MCF 10A (cell line): ENCODE measurements at regions of chr9 and their contacts with region 1.

Region 1: GRCh38 chr9:78601957-78602565 is 305.1 kb downstream of the PSAT1 start:
- DNase-seq: peak; percentile 67
- H3K4me3 Mint-ChIP-seq: no peak overlapping the region
- H3K27ac Mint-ChIP-seq: no peak overlapping the region
- H3K4me1 Mint-ChIP-seq: no peaks in the 10 kb centered on the region
- H3K27me3 Mint-ChIP-seq: no peaks in the 10 kb centered on the region
- CTCF ChIP-seq: peak; percentile 82

Region 2: GRCh38 chr9:78439190-78439865 is 162.7 kb before region 1 on chr9:
- CTCF ChIA-PET with region 1: interaction called, 7 read pairs
- POLR2A ChIA-PET with region 1: no interaction called
- intact Hi-C with region 1: loop called (anchors 1 kb)
- DNase-seq: peak; percentile 83
- H3K4me3 Mint-ChIP-seq: no peak overlapping the region
- H3K27ac Mint-ChIP-seq: no peak overlapping the region
- H3K4me1 Mint-ChIP-seq: no peaks in the 10 kb centered on the region
- H3K27me3 Mint-ChIP-seq: peaks cover 13% of the 10 kb centered on the region
- CTCF ChIP-seq: peak; percentile 93

Region 3: DNA sequence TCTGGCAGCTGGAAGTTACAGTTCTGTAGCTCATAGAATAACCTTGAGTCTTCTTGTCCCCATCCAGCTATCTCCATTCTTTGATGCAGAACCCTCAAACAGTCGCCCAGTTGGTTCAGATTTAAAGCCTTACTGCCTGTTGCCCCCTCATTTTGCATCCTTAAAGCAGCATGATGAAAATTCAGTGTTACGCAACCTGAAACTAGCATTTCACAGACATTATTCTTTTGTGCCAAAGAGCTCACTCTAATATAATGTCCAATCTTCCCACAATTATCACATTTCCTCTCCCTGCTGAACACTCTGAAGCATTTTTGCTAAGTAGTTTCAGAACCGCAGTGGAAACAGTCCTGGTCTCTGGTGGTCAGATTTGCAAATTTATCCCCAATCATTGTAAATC is 12.8 kb after region 1 on chr9:
- CTCF ChIA-PET with region 1: interaction called, 15 read pairs
- POLR2A ChIA-PET with region 1: interaction called, 5 read pairs
- intact Hi-C with region 1: no loop called
- DNase-seq: no peak
- H3K4me3 Mint-ChIP-seq: no peak overlapping the region
- H3K27ac Mint-ChIP-seq: no peak overlapping the region
- H3K4me1 Mint-ChIP-seq: peaks cover 6% of the 10 kb centered on the region
- H3K27me3 Mint-ChIP-seq: no peaks in the 10 kb centered on the region
- CTCF ChIP-seq: no peak

Region 4: DNA sequence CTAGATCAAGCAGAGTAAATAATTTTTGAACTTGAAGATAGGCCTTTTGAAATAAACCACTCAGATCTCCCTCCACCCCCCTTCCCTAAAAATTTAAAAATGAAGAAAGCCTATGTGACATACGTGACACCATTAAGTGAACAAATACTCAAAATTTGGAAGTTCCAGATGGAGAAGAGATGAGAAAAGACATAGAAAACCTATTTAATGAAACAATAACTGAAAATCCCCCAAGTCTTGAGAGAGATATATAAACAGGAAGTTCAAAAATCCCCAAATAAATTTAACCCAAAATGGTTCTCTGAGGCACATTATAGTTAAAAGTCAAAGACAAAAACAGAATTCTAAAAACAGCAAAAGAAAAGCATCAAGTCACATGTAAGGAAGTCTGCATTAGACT is 123.4 kb after region 1 on chr9:
- CTCF ChIA-PET with region 1: no interaction called
- POLR2A ChIA-PET with region 1: no interaction called
- intact Hi-C with region 1: no loop called
- DNase-seq: no peak
- H3K4me3 Mint-ChIP-seq: no peak overlapping the region
- H3K27ac Mint-ChIP-seq: no peak overlapping the region
- H3K4me1 Mint-ChIP-seq: no peaks in the 10 kb centered on the region
- H3K27me3 Mint-ChIP-seq: no peaks in the 10 kb centered on the region
- CTCF ChIP-seq: no peak

Region 5: DNA sequence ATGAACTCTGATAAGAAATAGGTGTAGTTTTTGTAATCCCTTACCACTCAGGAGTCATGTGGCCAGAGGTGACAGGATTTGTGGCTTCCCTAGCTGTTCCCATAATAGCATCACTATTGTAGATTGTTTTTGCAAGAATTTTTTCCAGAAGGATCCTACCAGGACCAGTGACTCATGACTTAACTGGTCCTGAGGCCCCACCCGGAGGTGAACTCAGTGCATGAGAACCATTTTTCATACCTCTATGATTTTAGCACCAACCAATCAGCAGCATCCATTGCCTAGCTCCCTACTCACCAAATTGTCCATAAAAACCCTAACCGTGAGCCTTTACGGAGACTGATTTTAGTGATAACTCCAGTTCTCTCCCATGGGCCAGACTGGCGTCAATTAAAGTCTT is 179.6 kb after region 1 on chr9:
- CTCF ChIA-PET with region 1: no interaction called
- POLR2A ChIA-PET with region 1: no interaction called
- intact Hi-C with region 1: loop called (anchors 1 kb)
- DNase-seq: peak; percentile 13
- H3K4me3 Mint-ChIP-seq: no peak overlapping the region
- H3K27ac Mint-ChIP-seq: no peak overlapping the region
- H3K4me1 Mint-ChIP-seq: no peaks in the 10 kb centered on the region
- H3K27me3 Mint-ChIP-seq: no peaks in the 10 kb centered on the region
- CTCF ChIP-seq: no peak

Region 6: DNA sequence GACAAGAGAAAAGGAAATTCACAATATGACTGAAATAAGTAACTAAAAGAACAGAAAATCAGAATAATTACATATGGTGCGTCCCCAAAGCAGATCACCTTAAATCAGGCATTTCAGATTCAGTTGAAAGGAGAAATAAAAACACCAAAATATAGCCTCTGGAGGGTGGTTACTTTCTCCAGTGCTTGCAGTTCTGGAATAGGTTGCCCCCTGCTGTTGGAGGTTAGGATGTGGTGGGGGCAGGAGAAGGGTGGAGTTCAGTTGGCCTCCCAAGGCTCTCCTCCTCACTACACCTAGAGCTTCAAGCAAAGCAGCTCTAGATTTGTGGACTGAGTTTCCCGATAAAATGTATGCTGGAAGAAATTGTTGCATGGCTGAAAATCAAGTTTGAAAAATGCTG is 631.5 kb after region 1 on chr9:
- CTCF ChIA-PET with region 1: interaction called, 4 read pairs
- POLR2A ChIA-PET with region 1: no interaction called
- intact Hi-C with region 1: loop called (anchors 1 kb)
- DNase-seq: peak; percentile 65
- H3K4me3 Mint-ChIP-seq: no peak overlapping the region
- H3K27ac Mint-ChIP-seq: no peak overlapping the region
- H3K4me1 Mint-ChIP-seq: no peaks in the 10 kb centered on the region
- H3K27me3 Mint-ChIP-seq: no peaks in the 10 kb centered on the region
- CTCF ChIP-seq: peak; percentile 45

Region 7: GRCh38 chr9:79256691-79257213 is 654.7 kb after region 1 on chr9:
- CTCF ChIA-PET with region 1: no interaction called
- POLR2A ChIA-PET with region 1: no interaction called
- intact Hi-C with region 1: loop called (anchors 5 kb)
- DNase-seq: no peak
- H3K4me3 Mint-ChIP-seq: no peak overlapping the region
- H3K27ac Mint-ChIP-seq: no peak overlapping the region
- H3K4me1 Mint-ChIP-seq: no peaks in the 10 kb centered on the region
- H3K27me3 Mint-ChIP-seq: no peaks in the 10 kb centered on the region
- CTCF ChIP-seq: no peak

Region 8: DNA sequence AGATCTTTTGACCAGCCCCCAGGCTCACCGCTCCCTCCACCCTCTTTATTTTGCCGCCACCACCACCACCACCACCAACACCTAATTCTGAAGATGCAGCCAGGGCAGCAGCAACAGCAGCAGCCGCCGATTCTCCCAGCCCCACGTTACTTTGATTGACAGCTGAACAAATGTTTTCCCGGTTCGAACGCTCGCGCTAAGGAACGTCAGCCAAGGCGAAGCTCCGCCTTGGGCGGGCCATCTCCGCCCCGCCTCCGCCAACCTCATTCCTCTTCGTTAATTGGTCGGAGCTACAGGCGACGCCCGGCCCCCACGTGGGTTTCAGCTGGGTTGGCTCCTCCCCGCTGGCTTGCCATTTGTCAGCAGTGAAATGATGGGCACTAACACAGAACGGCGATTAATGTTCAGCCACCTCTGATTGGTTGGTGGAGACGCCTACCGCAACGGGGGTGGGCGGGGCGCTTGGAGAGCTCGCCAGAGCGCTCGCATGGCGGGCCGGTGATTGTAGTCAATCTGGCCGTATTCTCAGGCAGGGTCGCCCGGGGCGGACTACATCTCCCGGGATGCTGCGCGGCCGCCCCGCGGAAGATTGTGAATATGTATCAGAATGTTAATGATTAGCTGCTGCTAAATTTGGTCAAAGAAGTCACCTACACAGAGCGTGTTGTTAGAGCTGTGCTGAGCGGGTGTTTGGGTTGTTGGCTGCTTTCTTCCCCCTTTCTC is 969.4 kb after region 1 on chr9 and contains the start of gene TLE4:
- CTCF ChIA-PET with region 1: no interaction called
- POLR2A ChIA-PET with region 1: no interaction called
- intact Hi-C with region 1: loop called (anchors 5 kb)
- DNase-seq: peak; percentile 99
- H3K4me3 Mint-ChIP-seq: no peak within 1 kb of the TSS
- H3K27ac Mint-ChIP-seq: no peak within 1 kb of the TSS
- H3K4me1 Mint-ChIP-seq: peaks cover 17% of the 10 kb centered on the region
- H3K27me3 Mint-ChIP-seq: no peaks in the 10 kb centered on the region
- CTCF ChIP-seq: no peak
- total RNA-seq, gene TLE4: 8.7 and 12.3 TPM in 2 replicates